GM12878 (cell line): ENCODE measurements at regions of chr19 and their contacts with region 1.

Region 1: GRCh38 chr19:44653977-44654774 is 10.5 kb downstream of the PVR start:
- DNase-seq: peak; percentile 38
- ATAC-seq: peak; percentile 99
- H3K4me3 ChIP-seq: no peak overlapping the region
- H3K27ac ChIP-seq: no peak overlapping the region
- H3K4me1 ChIP-seq: no peaks in the 10 kb centered on the region; the same call in 1 of the 2 replicates
- H3K27me3 ChIP-seq: no peaks in the 10 kb centered on the region
- CTCF ChIP-seq: peak; percentile 81 to 94 (median 87); a peak in 5 of 6 replicates
- EP300 ChIP-seq: no peak
- POLR2A ChIP-seq: no peak
- RAD21 ChIP-seq: peak; percentile 83

Region 2: GRCh38 chr19:44570984-44571684 is 83.0 kb before region 1 on chr19:
- CTCF ChIA-PET with region 1: interaction called, 32 read pairs
- POLR2A ChIA-PET with region 1: no interaction called
- RAD21 ChIA-PET with region 1: interaction called, 12 read pairs
- SMC1A ChIA-PET with region 1: interaction called, 11 read pairs
- in situ Hi-C with region 1: loop called (anchors 5 kb)
- intact Hi-C with region 1: loop called (anchors 5 kb)
- DNase-seq: no peak
- ATAC-seq: peak; percentile 80
- H3K4me3 ChIP-seq: no peak overlapping the region
- H3K27ac ChIP-seq: no peak overlapping the region
- H3K4me1 ChIP-seq: no peaks in the 10 kb centered on the region
- H3K27me3 ChIP-seq: no peaks in the 10 kb centered on the region; a peak in 1 of 4 replicates
- CTCF ChIP-seq: peak; percentile 58 to 60 (median 59)
- EP300 ChIP-seq: no peak
- POLR2A ChIP-seq: no peak
- RAD21 ChIP-seq: peak; percentile 74

Region 3: DNA sequence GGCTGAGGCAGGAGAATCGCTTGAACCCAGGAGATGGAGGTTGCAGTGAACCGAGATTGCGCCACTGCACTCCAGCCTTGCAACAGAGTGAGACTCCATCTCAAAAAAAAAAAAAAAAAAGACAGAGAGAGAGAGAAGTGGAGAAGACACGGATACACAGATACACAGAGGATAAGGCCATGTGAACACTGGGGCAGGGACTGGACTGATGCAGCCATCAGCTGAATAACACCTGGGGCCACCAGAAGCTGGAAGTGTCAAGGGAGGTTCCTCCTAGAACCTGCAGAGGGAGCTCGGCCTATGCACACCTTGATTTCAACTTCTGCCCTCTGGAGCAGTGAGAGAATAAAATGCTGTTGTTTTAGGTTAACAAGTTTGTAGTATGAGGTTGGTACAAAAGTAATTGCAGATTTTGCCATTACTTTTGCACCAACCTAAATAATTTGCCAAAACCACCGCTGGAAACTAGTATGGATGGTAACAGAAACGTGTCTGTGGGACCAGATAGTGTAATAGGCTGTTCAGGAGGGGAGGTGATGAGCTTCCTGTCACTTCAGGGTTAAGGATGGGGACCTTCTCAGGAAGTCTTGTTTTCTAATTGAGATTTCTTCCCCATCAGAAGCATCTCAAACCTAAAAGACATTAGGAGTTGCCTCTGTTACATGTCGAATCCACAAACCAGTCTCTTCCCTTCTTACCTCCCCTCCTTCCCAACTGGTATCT is 77.2 kb before region 1 on chr19:
- CTCF ChIA-PET with region 1: interaction called, 32 read pairs
- POLR2A ChIA-PET with region 1: no interaction called
- RAD21 ChIA-PET with region 1: interaction called, 4 read pairs
- SMC1A ChIA-PET with region 1: interaction called, 11 read pairs
- in situ Hi-C with region 1: loop called (anchors 5 kb)
- intact Hi-C with region 1: loop called (anchors 5 kb)
- DNase-seq: no peak
- ATAC-seq: peak; percentile 52; the same call in 2 of the 3 replicates
- H3K4me3 ChIP-seq: no peak overlapping the region
- H3K27ac ChIP-seq: no peak overlapping the region
- H3K4me1 ChIP-seq: no peaks in the 10 kb centered on the region
- H3K27me3 ChIP-seq: no peaks in the 10 kb centered on the region; a peak in 1 of 4 replicates
- CTCF ChIP-seq: peak; percentile 35 to 53 (median 38); a peak in 5 of 6 replicates
- EP300 ChIP-seq: no peak
- POLR2A ChIP-seq: no peak
- RAD21 ChIP-seq: 0 out of 2 replicates have a peak, but pooled peaks have one; percentile 42

Region 4: GRCh38 chr19:44626048-44626624 is 28.0 kb before region 1 on chr19:
- CTCF ChIA-PET with region 1: no interaction called
- POLR2A ChIA-PET with region 1: no interaction called
- RAD21 ChIA-PET with region 1: no interaction called
- SMC1A ChIA-PET with region 1: no interaction called
- in situ Hi-C with region 1: no loop called
- intact Hi-C with region 1: no loop called
- DNase-seq: no peak
- ATAC-seq: no peak
- H3K4me3 ChIP-seq: no peak overlapping the region
- H3K27ac ChIP-seq: no peak overlapping the region
- H3K4me1 ChIP-seq: no peaks in the 10 kb centered on the region
- H3K27me3 ChIP-seq: no peaks in the 10 kb centered on the region
- CTCF ChIP-seq: no peak
- EP300 ChIP-seq: no peak
- POLR2A ChIP-seq: no peak
- RAD21 ChIP-seq: no peak

Region 5: DNA sequence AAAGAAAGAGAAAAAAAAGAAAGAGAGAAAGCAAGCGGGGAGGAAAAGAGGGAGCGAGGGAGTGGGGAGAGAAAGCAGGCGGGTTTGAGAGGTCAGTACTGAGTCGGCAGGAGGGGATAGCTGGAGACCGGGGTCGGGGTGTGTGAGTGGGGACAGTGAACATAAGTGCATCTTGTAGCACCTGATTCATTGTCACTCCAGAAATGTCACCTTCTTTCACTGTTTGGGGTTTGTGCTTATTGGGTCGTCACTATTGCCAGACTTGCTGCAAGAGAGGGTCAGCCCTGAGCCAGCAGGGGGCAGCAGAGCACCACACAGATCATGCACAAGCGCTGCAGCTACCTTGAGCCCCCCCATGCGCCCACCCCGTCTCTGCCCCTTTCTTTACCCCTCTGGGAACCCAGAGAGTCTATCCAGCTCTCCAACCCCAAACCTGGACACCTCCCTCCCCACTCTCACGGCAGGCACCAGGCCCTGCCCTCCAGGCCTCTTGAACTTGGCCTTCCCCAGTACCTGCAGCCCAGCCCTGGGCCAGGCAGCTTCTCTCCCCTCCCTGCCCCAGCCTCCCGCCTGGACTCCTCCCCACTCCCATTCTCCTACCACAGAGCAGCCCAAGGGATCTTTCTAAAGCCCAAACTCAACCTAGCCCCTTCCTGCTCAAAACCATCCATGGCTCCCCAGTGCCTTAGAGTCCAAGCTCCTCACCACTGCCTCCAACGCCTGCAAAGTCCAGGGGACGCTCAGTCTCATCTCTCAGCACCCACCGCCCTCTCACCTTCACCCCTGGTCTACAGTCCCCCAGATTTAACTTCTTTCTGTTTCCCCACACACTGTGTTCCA is 35.1 kb after region 1 on chr19:
- CTCF ChIA-PET with region 1: interaction called, 9 read pairs
- POLR2A ChIA-PET with region 1: no interaction called
- RAD21 ChIA-PET with region 1: interaction called, 7 read pairs
- SMC1A ChIA-PET with region 1: interaction called, 4 read pairs
- in situ Hi-C with region 1: no loop called
- intact Hi-C with region 1: loop called (anchors 2 kb)
- DNase-seq: no peak
- ATAC-seq: peak; percentile 54
- H3K4me3 ChIP-seq: no peak overlapping the region
- H3K27ac ChIP-seq: no peak overlapping the region
- H3K4me1 ChIP-seq: peaks cover 44% of the 10 kb centered on the region
- H3K27me3 ChIP-seq: no peaks in the 10 kb centered on the region
- CTCF ChIP-seq: peak; percentile 89 to 98 (median 92)
- EP300 ChIP-seq: no peak
- POLR2A ChIP-seq: no peak
- RAD21 ChIP-seq: peak; percentile 82

Region 6: GRCh38 chr19:44770550-44771257 is 116.5 kb after region 1 on chr19:
- CTCF ChIA-PET with region 1: interaction called, 59 read pairs
- POLR2A ChIA-PET with region 1: interaction called, 3 read pairs
- RAD21 ChIA-PET with region 1: interaction called, 33 read pairs
- SMC1A ChIA-PET with region 1: interaction called, 37 read pairs
- in situ Hi-C with region 1: no loop called
- intact Hi-C with region 1: loop called (anchors 10 kb)
- DNase-seq: peak; percentile 97
- ATAC-seq: peak; percentile 100
- H3K4me3 ChIP-seq: no peak overlapping the region
- H3K27ac ChIP-seq: peak overlapping the region; percentile 25; the same call in 1 of the 2 replicates
- H3K4me1 ChIP-seq: peaks cover 22% of the 10 kb centered on the region
- H3K27me3 ChIP-seq: no peaks in the 10 kb centered on the region
- CTCF ChIP-seq: peak; percentile 64 to 89 (median 64)
- EP300 ChIP-seq: no peak
- POLR2A ChIP-seq: no peak
- RAD21 ChIP-seq: peak; percentile 92

Region 7: DNA sequence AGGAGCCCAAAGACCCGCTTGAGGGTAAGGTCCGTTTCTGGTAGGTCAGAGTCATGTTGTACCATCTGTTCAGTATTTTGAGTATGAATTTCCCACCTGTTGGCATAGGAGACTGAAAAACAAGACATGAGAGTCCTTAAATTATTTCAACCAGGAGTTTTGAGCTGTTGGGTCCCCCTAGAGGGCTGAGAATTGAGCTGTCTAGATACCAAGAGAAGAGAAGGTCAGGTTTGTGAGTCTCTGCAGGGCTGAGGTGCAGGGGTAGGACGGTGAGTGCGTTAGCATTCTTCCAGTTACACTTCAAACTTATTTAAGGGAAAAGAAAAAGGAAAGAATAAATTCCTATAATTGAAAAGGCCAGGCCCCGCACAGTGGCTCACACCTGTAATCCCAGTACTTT is 128.6 kb after region 1 on chr19:
- CTCF ChIA-PET with region 1: interaction called, 12 read pairs
- POLR2A ChIA-PET with region 1: no interaction called
- RAD21 ChIA-PET with region 1: interaction called, 6 read pairs
- SMC1A ChIA-PET with region 1: no interaction called
- in situ Hi-C with region 1: no loop called
- intact Hi-C with region 1: loop called (anchors 10 kb)
- DNase-seq: no peak
- ATAC-seq: no peak
- H3K4me3 ChIP-seq: no peak overlapping the region
- H3K27ac ChIP-seq: no peak overlapping the region
- H3K4me1 ChIP-seq: no peaks in the 10 kb centered on the region; the same call in 1 of the 2 replicates
- H3K27me3 ChIP-seq: no peaks in the 10 kb centered on the region
- CTCF ChIP-seq: no peak
- EP300 ChIP-seq: no peak
- POLR2A ChIP-seq: no peak
- RAD21 ChIP-seq: no peak

Region 8: DNA sequence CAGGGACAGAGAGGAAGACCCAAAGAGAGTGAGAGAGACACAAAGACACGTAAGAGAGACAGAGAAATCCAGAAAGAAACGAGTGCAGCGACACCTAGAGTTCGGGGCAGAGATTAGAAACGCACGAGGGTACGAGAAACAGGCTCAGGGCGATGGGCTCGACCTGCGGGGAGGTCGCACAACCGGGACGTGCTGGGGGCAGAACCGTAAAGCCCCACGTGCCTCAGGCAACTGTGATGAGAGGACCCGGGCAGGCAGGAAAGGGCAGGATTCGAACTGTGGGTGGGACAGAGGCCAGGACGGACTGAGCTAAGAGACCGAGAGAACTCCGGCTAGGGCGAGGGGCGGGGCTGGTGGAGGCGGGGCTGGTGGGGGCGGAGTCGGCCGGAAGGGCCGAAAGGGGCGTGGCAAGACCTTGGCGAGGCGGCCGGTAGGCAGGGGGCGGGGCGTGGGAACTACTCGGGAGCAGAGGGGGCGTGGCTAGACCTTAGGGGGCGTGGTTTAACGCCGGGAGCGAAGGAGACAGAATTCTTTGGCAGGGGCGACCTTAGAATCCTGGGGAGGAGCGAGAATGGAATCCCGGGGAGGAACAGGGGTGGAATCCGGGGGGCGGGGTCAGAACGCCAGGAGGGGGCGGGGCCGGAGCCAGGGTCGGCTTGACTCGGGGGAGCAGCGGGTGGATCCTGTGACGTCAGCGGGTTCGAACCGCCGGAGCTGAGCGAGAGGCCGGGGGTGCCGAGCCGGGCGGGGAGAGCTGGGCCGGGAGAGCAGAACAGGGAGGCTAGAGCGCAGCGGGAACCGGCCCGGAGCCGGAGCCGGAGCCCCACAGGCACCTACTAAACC is 191.7 kb after region 1 on chr19 and contains the start of gene NECTIN2:
- CTCF ChIA-PET with region 1: interaction called, 9 read pairs
- POLR2A ChIA-PET with region 1: no interaction called
- RAD21 ChIA-PET with region 1: interaction called, 5 read pairs
- SMC1A ChIA-PET with region 1: interaction called, 3 read pairs
- in situ Hi-C with region 1: no loop called
- intact Hi-C with region 1: loop called (anchors 10 kb)
- DNase-seq: peak; percentile 37
- ATAC-seq: peak; percentile 85
- H3K4me3 ChIP-seq: peak within 1 kb of the TSS; percentile 59; the same call in 1 of the 2 replicates
- H3K27ac ChIP-seq: no peak within 1 kb of the TSS
- H3K4me1 ChIP-seq: peaks cover 8% of the 10 kb centered on the region
- H3K27me3 ChIP-seq: peaks cover 9 to 11% of the 10 kb centered on the region in 2 experiments
- CTCF ChIP-seq: peak; percentile 47 to 75 (median 60)
- EP300 ChIP-seq: no peak
- POLR2A ChIP-seq: no peak
- RAD21 ChIP-seq: 0 out of 2 replicates have a peak, but pooled peaks have one; percentile 21
- polyA plus RNA-seq, gene NECTIN2: not detected